Activated T-helper 2 cell treated with anti-CD3 and anti-CD28 coated beads, Interferon-gamma antibody, Interleukin-2, Interleukin-4, amounts not matched to agents 10 μg/mL and 5 μg/mL and 100 μg/mL, durations not matched to agents 14 hours and 24 hours and 36 hours (primary cell): ENCODE measurements at regions of chr7 and their contacts with region 1.

Region 1: GRCh38 chr7:77269360-77270093 is 69.9 kb upstream of the FGL2 start:
- DNase-seq: no peak
- H3K4me3 Mint-ChIP-seq: no peak overlapping the region
- H3K27ac Mint-ChIP-seq: no peak overlapping the region
- H3K4me1 Mint-ChIP-seq: peaks cover 26% of the 10 kb centered on the region
- H3K27me3 Mint-ChIP-seq: peaks cover 3% of the 10 kb centered on the region

Region 2: DNA sequence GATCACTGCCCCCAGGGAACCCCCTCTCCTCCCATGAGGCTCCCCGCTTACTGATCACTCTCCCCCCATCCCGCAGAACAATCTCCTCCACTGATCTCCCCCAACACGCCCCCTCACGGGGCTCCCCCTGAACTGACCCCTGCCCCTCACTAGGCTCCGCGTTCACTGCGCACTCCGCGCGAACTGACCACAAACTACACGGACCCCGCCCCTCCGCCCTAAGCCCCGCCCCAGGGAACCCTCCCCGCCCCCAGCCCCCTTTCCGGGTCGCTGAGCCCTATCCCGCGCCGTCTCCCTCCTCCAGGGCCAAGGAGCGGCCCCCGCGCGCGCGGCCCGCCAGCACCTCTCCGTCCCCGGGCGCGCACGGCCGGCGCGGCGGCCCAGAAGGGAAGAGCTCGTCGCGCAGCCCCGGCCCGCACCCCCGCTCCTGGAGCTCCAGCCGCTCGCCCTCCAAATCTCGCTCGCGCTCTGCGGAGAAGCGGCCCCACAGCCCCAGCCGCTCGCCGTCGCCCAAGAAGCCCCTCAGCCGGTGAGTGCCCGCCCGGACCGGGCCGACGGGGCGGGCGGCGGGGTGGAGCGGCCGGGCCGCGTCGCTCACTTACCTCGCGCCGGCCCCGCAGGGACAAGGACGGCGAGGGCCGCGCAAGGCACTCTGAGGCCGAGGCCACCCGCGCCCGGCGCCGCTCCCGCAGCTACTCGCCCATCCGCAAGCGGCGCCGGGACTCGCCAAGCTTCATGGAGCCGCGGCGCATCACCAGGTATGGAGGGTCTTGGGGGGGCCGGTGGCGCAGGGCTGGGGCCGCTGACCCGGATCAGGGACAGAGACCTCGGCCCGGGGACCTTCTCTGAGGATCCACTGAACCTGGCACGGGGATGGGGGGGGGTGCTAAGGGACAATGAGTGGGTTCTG is 986.9 kb before region 1 on chr7:
- intact Hi-C with region 1: no loop called
- DNase-seq: no peak
- H3K4me3 Mint-ChIP-seq: peak overlapping the region; percentile 68
- H3K27ac Mint-ChIP-seq: no peak overlapping the region
- H3K4me1 Mint-ChIP-seq: peaks cover 6% of the 10 kb centered on the region
- H3K27me3 Mint-ChIP-seq: peaks cover 53% of the 10 kb centered on the region

Region 3: GRCh38 chr7:77226357-77226839 is 43.1 kb before region 1 on chr7:
- intact Hi-C with region 1: no loop called
- DNase-seq: no peak
- H3K4me3 Mint-ChIP-seq: no peak overlapping the region
- H3K27ac Mint-ChIP-seq: no peak overlapping the region
- H3K4me1 Mint-ChIP-seq: peaks cover 10% of the 10 kb centered on the region
- H3K27me3 Mint-ChIP-seq: peaks cover 6% of the 10 kb centered on the region

Region 4: GRCh38 chr7:77247206-77247850 is 22.2 kb before region 1 on chr7:
- intact Hi-C with region 1: loop called (anchors 2 kb)
- DNase-seq: peak; percentile 73
- H3K4me3 Mint-ChIP-seq: no peak overlapping the region
- H3K27ac Mint-ChIP-seq: no peak overlapping the region
- H3K4me1 Mint-ChIP-seq: peaks cover 12% of the 10 kb centered on the region
- H3K27me3 Mint-ChIP-seq: peaks cover 14% of the 10 kb centered on the region

Region 5: DNA sequence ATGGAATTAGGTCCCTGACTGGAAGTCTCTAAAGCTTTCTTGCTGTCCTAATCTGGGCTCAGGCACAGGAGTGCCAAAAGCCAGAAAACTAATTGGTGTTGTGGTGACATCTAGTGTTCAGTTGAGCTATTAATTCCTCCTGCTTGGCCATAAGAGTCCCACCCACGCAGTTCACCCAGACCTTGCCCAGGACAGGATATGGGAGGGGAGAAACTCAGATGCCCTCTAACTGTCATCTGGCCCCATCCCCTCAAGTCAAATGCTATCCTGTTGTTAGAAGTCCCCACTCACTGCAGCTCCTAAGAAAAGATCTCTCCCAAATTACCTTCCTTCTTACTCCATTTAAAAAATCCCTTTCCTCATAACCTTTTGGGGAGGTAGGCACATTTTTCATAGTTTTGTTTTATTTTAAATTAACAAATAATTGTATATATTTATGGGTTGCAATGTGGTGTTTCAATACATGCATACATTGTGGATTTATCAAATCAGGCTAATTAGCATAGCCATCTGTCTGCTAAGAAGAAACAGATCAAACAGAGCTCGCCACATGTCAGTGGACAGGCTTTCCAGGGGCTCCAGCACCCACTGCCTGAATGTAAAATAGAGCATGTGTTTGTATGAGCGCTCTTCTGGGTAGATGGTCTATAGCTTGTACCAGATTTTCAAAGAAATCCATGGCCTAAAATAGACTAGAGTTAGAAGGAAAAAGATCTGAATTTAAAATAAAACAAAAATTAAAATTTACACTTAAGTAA is 62.6 kb after region 1 on chr7:
- intact Hi-C with region 1: loop called (anchors 1 kb)
- DNase-seq: peak; percentile 31
- H3K4me3 Mint-ChIP-seq: no peak overlapping the region
- H3K27ac Mint-ChIP-seq: no peak overlapping the region
- H3K4me1 Mint-ChIP-seq: peaks cover 38% of the 10 kb centered on the region
- H3K27me3 Mint-ChIP-seq: no peaks in the 10 kb centered on the region

Region 6: GRCh38 chr7:77393269-77393668 is 123.7 kb after region 1 on chr7:
- intact Hi-C with region 1: loop called (anchors 1 kb)
- DNase-seq: peak; percentile 14
- H3K4me3 Mint-ChIP-seq: no peak overlapping the region
- H3K27ac Mint-ChIP-seq: no peak overlapping the region
- H3K4me1 Mint-ChIP-seq: peaks cover 9% of the 10 kb centered on the region
- H3K27me3 Mint-ChIP-seq: no peaks in the 10 kb centered on the region

Region 7: DNA sequence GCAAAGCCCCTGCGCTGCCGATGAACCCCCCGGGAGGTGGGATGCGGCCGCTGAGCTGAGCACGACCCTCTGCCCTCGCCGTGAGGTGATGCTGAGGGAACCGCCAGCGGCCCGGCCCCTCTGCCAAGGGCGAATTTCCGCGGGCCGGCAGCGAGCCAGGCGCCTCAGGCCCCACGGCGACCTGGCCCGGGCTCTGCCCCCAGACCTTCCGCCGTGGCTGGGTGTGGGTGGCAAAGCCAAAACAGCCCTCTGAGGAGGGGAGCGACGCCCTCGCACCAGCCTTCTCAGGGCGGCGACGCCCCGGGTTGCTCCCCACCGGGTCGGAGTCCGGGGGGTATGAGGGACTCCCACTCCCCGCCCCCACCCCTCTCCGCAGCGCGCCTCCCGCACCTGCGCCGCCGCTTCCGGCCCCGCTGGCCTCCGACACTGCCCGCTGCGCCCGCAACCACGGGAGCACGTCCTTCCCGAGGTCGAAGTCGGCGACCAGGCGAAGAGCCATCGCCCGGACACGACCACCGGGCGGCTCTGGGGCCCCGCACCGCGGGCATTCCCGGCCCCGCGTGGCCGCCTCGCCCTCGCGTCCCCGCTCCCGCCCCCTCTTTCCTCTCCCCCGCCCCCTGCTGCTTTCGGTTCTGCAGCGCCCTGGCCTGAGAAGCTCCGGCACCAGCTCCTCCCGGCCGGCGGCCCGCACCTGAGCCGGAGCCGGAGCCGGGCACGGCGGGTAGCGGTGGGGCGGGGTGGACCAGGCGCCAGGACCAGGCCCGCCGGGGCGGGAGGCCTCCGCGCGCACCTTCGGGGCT is 146.5 kb after region 1 on chr7 and contains the start of gene GSAP:
- intact Hi-C with region 1: loop called (anchors 5 kb)
- DNase-seq: peak; percentile 29
- H3K4me3 Mint-ChIP-seq: peak within 1 kb of the TSS; percentile 45
- H3K27ac Mint-ChIP-seq: no peak within 1 kb of the TSS
- H3K4me1 Mint-ChIP-seq: peaks cover 25% of the 10 kb centered on the region
- H3K27me3 Mint-ChIP-seq: peaks cover 36% of the 10 kb centered on the region
- total RNA-seq, gene GSAP: 0.43 and 0.90 TPM in 2 replicates

Region 8: GRCh38 chr7:77536413-77537135 is 267.0 kb after region 1 on chr7:
- intact Hi-C with region 1: loop called (anchors 5 kb)
- DNase-seq: peak; percentile 93
- H3K4me3 Mint-ChIP-seq: peak overlapping the region; percentile 87
- H3K27ac Mint-ChIP-seq: peak overlapping the region; percentile 70
- H3K4me1 Mint-ChIP-seq: peaks cover 14% of the 10 kb centered on the region
- H3K27me3 Mint-ChIP-seq: no peaks in the 10 kb centered on the region